WTC11 (cell line): ENCODE measurements at regions of chr1 and their contacts with region 1.

Region 1: GRCh38 chr1:7646981-7647901 is 123.9 kb upstream of the VAMP3 start:
- DNase-seq: peak; percentile 84
- ATAC-seq: peak; percentile 62
- H3K4me3 Mint-ChIP-seq: no peak overlapping the region
- H3K27ac Mint-ChIP-seq: no peak overlapping the region
- H3K4me1 Mint-ChIP-seq: peaks cover 21% of the 10 kb centered on the region
- H3K27me3 Mint-ChIP-seq: no peaks in the 10 kb centered on the region
- CTCF ChIP-seq: peak; percentile 93

Region 2: GRCh38 chr1:7224644-7225043 is 422.6 kb before region 1 on chr1:
- CTCF ChIA-PET with region 1: interaction called, 14 read pairs
- POLR2A ChIA-PET with region 1: no interaction called
- DNase-seq: peak; percentile 50
- ATAC-seq: peak; percentile 69
- H3K4me3 Mint-ChIP-seq: no peak overlapping the region
- H3K27ac Mint-ChIP-seq: no peak overlapping the region
- H3K4me1 Mint-ChIP-seq: no peaks in the 10 kb centered on the region
- H3K27me3 Mint-ChIP-seq: no peaks in the 10 kb centered on the region
- CTCF ChIP-seq: no peak

Region 3: GRCh38 chr1:7454052-7454815 is 193.0 kb before region 1 on chr1:
- CTCF ChIA-PET with region 1: interaction called, 10 read pairs
- POLR2A ChIA-PET with region 1: no interaction called
- DNase-seq: peak; percentile 38
- ATAC-seq: peak; percentile 17; the same call in 1 of the 2 replicates
- H3K4me3 Mint-ChIP-seq: no peak overlapping the region
- H3K27ac Mint-ChIP-seq: no peak overlapping the region
- H3K4me1 Mint-ChIP-seq: peaks cover 36% of the 10 kb centered on the region
- H3K27me3 Mint-ChIP-seq: no peaks in the 10 kb centered on the region
- CTCF ChIP-seq: no peak

Region 4: DNA sequence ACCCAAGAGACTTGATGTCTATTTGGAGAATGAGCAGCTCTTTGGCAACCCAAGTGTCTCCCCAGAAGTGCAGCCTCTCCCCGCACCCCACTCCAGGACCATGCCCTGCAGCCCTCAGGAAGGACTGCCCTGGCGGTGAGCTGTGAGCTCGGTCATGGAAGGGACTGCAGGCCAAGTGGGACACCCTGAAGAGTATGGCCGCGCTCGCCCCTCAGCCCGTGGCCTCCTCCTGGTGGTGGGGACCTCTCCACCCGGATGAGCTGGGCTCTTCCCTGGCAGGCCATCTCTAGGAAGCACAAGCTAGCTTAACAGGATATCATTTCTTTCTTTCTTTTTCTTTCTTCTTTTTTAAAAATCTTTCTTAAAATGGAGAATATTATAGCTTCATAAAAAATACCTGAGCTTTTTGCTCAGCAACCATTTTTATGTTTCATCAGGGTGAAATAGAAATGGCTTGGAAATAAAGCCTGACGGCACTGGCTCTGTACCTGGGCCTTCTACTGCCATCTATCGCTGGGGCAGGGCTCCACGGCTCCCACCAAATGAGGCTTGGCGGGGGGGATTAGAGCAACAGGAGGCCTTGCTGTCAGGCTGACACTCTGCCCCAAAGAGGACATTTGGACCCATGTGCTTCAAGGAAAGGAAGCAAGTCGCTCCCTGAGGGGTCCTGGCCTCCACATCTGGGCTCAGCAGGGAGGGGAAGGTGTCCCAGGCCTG is 172.3 kb before region 1 on chr1:
- CTCF ChIA-PET with region 1: interaction called, 11 read pairs
- POLR2A ChIA-PET with region 1: no interaction called
- DNase-seq: peak; percentile 51
- ATAC-seq: peak; percentile 75
- H3K4me3 Mint-ChIP-seq: no peak overlapping the region
- H3K27ac Mint-ChIP-seq: no peak overlapping the region
- H3K4me1 Mint-ChIP-seq: no peaks in the 10 kb centered on the region
- H3K27me3 Mint-ChIP-seq: no peaks in the 10 kb centered on the region
- CTCF ChIP-seq: no peak

Region 5: GRCh38 chr1:7549277-7550161 is 97.7 kb before region 1 on chr1:
- CTCF ChIA-PET with region 1: interaction called, 13 read pairs
- POLR2A ChIA-PET with region 1: no interaction called
- DNase-seq: no peak
- ATAC-seq: no peak
- H3K4me3 Mint-ChIP-seq: no peak overlapping the region
- H3K27ac Mint-ChIP-seq: no peak overlapping the region
- H3K4me1 Mint-ChIP-seq: peaks cover 23% of the 10 kb centered on the region
- H3K27me3 Mint-ChIP-seq: no peaks in the 10 kb centered on the region
- CTCF ChIP-seq: no peak

Region 6: GRCh38 chr1:7574121-7575040 is 72.9 kb before region 1 on chr1:
- CTCF ChIA-PET with region 1: interaction called, 11 read pairs
- POLR2A ChIA-PET with region 1: no interaction called
- DNase-seq: no peak
- ATAC-seq: no peak
- H3K4me3 Mint-ChIP-seq: no peak overlapping the region
- H3K27ac Mint-ChIP-seq: no peak overlapping the region
- H3K4me1 Mint-ChIP-seq: no peaks in the 10 kb centered on the region
- H3K27me3 Mint-ChIP-seq: no peaks in the 10 kb centered on the region
- CTCF ChIP-seq: no peak

Region 7: GRCh38 chr1:7580923-7581753 is 66.1 kb before region 1 on chr1:
- CTCF ChIA-PET with region 1: interaction called, 34 read pairs
- POLR2A ChIA-PET with region 1: no interaction called
- DNase-seq: no peak
- ATAC-seq: no peak
- H3K4me3 Mint-ChIP-seq: no peak overlapping the region
- H3K27ac Mint-ChIP-seq: no peak overlapping the region
- H3K4me1 Mint-ChIP-seq: no peaks in the 10 kb centered on the region
- H3K27me3 Mint-ChIP-seq: no peaks in the 10 kb centered on the region
- CTCF ChIP-seq: no peak

Region 8: GRCh38 chr1:7770997-7771822 is 124.0 kb after region 1 on chr1 and contains the start of gene VAMP3:
- CTCF ChIA-PET with region 1: no interaction called
- POLR2A ChIA-PET with region 1: no interaction called
- DNase-seq: peak; percentile 88
- ATAC-seq: peak; percentile 95
- H3K4me3 Mint-ChIP-seq: peak within 1 kb of the TSS; percentile 86
- H3K27ac Mint-ChIP-seq: peak within 1 kb of the TSS; percentile 79
- H3K4me1 Mint-ChIP-seq: peaks cover 15% of the 10 kb centered on the region
- H3K27me3 Mint-ChIP-seq: no peaks in the 10 kb centered on the region
- CTCF ChIP-seq: no peak
- total RNA-seq, gene VAMP3: 34.7 to 50.2 TPM (median 40.2 TPM) in 3 replicates

Region 9: DNA sequence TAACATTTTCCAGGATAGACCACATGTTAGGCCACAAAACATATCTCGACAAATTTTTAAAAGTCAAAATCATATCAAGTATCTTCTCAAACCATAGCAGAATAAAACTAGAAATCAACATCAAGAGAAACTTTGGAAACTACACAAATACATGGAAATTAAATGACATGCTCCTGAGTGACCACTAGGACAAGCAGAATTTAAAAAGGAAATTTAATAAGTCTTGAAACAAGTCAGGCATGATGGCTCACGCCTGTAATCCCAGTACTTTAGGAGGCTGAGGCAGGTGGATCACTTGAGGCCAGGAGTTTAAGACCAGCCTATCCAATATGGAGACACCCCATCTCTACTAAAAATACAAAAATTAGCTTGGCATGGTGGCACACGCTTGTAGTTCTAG is 232.0 kb after region 1 on chr1:
- CTCF ChIA-PET with region 1: no interaction called
- POLR2A ChIA-PET with region 1: no interaction called
- DNase-seq: no peak
- ATAC-seq: no peak
- H3K4me3 Mint-ChIP-seq: no peak overlapping the region
- H3K27ac Mint-ChIP-seq: no peak overlapping the region
- H3K4me1 Mint-ChIP-seq: no peaks in the 10 kb centered on the region
- H3K27me3 Mint-ChIP-seq: peaks cover 2% of the 10 kb centered on the region; the same call in 1 of the 2 replicates
- CTCF ChIP-seq: no peak